ENCODE measurements at regions of chr22 and their contacts with region 1.

Region 1: DNA sequence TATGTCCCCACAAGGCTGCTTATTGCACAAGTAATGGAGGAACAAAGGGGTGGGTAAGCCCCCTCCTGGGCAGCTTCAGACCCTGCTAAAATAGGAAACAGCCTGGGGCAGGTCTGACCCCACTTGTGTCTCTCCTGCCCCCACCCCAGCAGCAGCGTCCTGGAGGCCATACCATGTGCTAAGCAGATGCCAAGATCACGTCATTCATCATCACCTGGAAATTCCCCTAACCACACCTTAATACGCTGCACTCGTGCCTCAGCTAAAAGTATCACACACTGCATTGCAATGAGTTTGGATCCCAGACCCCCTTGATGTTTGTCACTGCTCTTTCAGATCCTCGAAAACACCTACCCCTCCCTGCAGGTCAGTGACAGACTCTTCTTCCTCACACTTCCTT is 27.8 kb upstream of the GGTLC2 start:
- DNase-seq: peak in 1 of 4 experiments; percentile 40
- ATAC-seq: peak; percentile 1
- H3K4me3 ChIP-seq: no peak overlapping the region
- H3K27ac ChIP-seq: no peak overlapping the region
- H3K4me1 ChIP-seq: no peaks in the 10 kb centered on the region
- H3K27me3 ChIP-seq: peaks cover 52 to 64% of the 10 kb centered on the region in 2 experiments
- CTCF ChIP-seq: no peak
- EP300 ChIP-seq: no peak
- POLR2A ChIP-seq: no peak
- RAD21 ChIP-seq: no peak

Region 2: DNA sequence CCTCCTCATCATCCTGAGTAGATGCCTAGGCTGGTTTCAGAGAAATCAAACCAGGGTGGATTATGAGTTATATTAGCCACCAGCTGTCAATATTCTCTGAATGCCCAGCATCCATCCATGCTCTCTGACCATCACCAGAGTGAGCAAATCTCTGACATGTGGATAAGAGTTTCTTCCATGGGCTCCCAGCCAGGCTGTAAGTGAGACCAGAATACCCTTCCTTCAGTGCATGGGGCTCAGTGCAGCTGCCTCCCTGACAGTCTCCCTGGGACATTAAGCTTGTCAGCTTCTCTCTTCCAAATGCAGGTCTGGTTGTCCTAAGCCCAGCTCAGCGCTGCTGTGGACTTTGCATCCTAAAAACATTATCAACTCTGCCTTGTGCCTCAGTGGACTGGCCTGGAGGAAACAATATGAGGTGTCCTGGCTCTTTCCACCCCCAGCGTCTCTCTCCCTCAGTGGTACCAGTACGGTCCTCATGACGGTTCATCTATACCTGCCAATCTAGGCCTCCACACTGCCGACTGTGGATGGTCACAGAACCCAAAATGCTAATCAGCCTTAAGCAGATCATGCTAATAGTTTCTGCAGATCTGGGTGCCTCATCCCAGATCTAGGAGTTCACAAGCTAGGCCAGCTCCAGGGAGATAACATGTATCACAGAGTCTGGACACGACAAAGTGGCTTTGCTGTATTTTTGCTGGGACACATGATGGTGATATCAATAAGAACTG is 15.9 kb before region 1 on chr22:
- CTCF ChIA-PET with region 1: interaction called, 27 read pairs
- POLR2A ChIA-PET with region 1: interaction called, 22 read pairs
- in situ Hi-C with region 1: no loop called
- intact Hi-C with region 1: no loop called
- DNase-seq: peak in 1 of 4 experiments; percentile 19
- ATAC-seq: no peak
- H3K4me3 ChIP-seq: no peak overlapping the region
- H3K27ac ChIP-seq: no peak overlapping the region
- H3K4me1 ChIP-seq: no peaks in the 10 kb centered on the region
- H3K27me3 ChIP-seq: peaks cover 61 to 68% of the 10 kb centered on the region in 2 experiments
- CTCF ChIP-seq: no peak
- EP300 ChIP-seq: no peak
- POLR2A ChIP-seq: no peak
- RAD21 ChIP-seq: no peak